Right cardiac atrium (tissue), 5 donors: ENCODE measurements at regions of chr20 and their contacts with region 1.

Region 1: GRCh38 chr20:45545754-45546453 is 1.3 kb downstream of the EPPIN start:
- DNase-seq: no peak
- ATAC-seq: no peak
- H3K4me3 ChIP-seq: no peak overlapping the region
- H3K27ac ChIP-seq: no peak overlapping the region
- H3K4me1 ChIP-seq: no peaks in the 10 kb centered on the region
- H3K27me3 ChIP-seq: no peaks in the 10 kb centered on the region

Region 2: GRCh38 chr20:45752746-45753145 is 206.8 kb after region 1 on chr20:
- intact Hi-C with region 1: loop called in 1 of 4 experiments (anchors 10 kb)
- DNase-seq: no peak
- ATAC-seq: no peak
- H3K4me3 ChIP-seq: no peak overlapping the region
- H3K27ac ChIP-seq: no peak overlapping the region
- H3K4me1 ChIP-seq: no peaks in the 10 kb centered on the region
- H3K27me3 ChIP-seq: no peaks in the 10 kb centered on the region